Dendritic cell treated with granulocyte-macrophage colony-stimulating factor and Interleukin-4, amounts not matched to agents 40 ng/mL and 50 ng/mL, for 4 days (primary cell): ENCODE measurements at regions of chr11 and their contacts with region 1.

Region 1: GRCh38 chr11:33329705-33330329 is 72.6 kb downstream of the HIPK3 start:
- H3K4me3 Mint-ChIP-seq: no peak overlapping the region
- H3K27ac Mint-ChIP-seq: no peak overlapping the region
- H3K4me1 Mint-ChIP-seq: peaks cover 19% of the 10 kb centered on the region
- H3K27me3 Mint-ChIP-seq: no peaks in the 10 kb centered on the region

Region 2: DNA sequence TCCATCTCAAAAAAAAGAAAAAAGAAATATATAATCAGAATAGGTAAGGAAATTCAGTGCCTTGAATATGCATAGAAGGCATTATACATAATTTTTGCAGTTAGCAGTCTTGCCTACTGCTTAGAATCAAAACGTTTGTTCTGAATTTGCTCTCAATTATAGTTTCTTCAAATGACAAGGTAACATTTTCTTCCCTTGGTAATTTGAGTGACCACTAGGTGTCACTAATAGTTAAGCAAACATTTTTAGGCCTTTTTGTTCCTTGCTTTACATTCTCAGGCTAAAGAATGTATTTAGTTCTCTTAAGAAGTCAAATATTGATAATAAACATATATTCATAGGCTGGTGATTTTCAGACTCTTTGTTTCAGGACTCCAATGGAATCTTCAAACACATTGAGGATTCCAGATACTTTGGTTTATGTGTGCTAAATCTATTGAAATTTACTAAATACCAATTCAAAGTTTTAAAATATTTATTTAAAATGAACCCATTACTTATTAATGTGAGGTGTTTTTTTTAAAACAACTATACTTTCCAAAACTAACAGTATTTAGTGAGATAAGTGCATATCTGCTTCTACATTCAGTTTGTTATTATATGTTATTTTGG is 369.2 kb before region 1 on chr11:
- intact Hi-C with region 1: loop called (anchors 10 kb)
- H3K4me3 Mint-ChIP-seq: no peak overlapping the region
- H3K27ac Mint-ChIP-seq: no peak overlapping the region
- H3K4me1 Mint-ChIP-seq: peaks cover 5% of the 10 kb centered on the region
- H3K27me3 Mint-ChIP-seq: no peaks in the 10 kb centered on the region

Region 3: DNA sequence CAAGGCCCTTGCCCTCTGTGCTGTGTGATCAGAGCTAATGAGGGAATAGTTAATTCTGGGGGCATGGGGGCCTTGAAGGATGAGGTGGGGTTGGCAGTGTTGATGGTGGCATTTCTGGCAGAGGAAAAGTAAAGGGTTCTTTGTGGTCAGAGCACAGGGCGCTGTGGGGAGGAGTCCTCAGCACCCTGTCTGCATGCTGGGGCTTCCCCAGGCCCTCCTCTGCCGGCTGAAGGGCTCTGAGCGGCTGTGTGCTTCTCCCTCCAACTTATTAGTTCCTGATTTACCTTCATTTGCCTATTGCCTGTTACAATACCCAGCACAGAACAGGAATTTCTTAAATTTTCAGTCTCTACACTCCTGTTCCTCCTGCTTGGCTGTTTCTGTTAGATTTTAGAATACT is 50.1 kb after region 1 on chr11:
- intact Hi-C with region 1: no loop called
- H3K4me3 Mint-ChIP-seq: no peak overlapping the region
- H3K27ac Mint-ChIP-seq: no peak overlapping the region
- H3K4me1 Mint-ChIP-seq: no peaks in the 10 kb centered on the region
- H3K27me3 Mint-ChIP-seq: peaks cover 32% of the 10 kb centered on the region

Region 4: DNA sequence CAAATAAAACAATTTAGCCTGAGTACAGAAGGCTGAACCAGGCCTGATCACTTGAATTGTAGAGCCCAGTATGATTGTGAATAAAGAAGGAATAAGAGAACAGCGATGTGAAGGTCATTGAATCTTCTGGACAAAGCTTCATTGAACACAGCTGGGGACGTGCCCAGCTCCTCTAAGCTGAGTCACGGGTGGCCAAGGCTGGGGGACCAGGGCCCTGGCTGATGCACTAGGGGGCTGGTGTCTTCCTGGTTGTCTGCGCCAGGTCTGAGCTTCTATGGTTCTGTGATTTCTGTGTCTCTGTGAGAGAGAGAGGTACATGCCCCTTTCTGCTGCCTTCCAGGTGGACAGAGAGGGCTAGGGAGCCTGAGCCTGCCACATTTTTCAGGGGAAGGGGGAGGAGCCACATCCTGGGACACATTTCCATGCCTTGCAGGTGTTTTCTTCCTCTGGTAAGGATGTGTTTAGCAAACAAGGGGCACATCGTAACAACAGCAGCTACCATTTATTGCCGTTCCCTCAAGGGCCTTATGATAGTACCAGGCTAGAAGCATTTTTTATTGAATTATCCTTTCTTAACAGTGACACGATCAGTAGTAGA is 235.1 kb after region 1 on chr11:
- intact Hi-C with region 1: no loop called
- H3K4me3 Mint-ChIP-seq: no peak overlapping the region
- H3K27ac Mint-ChIP-seq: no peak overlapping the region
- H3K4me1 Mint-ChIP-seq: peaks cover 5% of the 10 kb centered on the region
- H3K27me3 Mint-ChIP-seq: peaks cover 21% of the 10 kb centered on the region